ENCODE measurements at regions of chr14 and their contacts with region 1.

Region 1: GRCh38 chr14:56491299-56492285 is 88.0 kb upstream of the TMEM260 start:
- DNase-seq: no peak
- ATAC-seq: peak; percentile 61
- H3K4me3 Mint-ChIP-seq: no peak overlapping the region
- H3K27ac Mint-ChIP-seq: no peak overlapping the region
- H3K4me1 Mint-ChIP-seq: peaks cover 4% of the 10 kb centered on the region
- H3K27me3 Mint-ChIP-seq: no peaks in the 10 kb centered on the region
- CTCF ChIP-seq: no peak

Region 2: DNA sequence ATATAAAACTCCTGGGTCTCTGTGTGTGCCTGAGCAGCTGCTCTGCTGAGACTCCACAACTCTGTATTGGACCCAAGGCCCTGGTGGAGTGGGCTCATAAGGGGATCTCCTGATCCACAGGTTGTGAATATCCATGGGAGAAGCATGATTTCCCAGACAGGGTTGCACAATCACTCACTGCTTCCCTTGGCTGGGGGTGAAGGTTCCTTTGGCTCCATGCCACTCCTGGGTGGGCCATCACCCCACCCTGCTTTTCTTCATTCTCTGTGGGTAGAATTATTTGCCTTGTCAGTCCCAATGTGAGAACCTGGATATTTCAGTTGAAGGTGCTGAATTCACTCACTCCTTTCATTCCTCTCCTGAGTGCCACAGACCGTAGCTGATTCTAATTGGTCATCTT is 117.2 kb before region 1 on chr14:
- CTCF ChIA-PET with region 1: no interaction called
- POLR2A ChIA-PET with region 1: no interaction called
- intact Hi-C with region 1: no loop called
- DNase-seq: no peak
- ATAC-seq: no peak
- H3K4me3 Mint-ChIP-seq: no peak overlapping the region
- H3K27ac Mint-ChIP-seq: no peak overlapping the region
- H3K4me1 Mint-ChIP-seq: no peaks in the 10 kb centered on the region
- H3K27me3 Mint-ChIP-seq: no peaks in the 10 kb centered on the region
- CTCF ChIP-seq: no peak

Region 3: GRCh38 chr14:56422703-56423213 is 68.8 kb before region 1 on chr14:
- CTCF ChIA-PET with region 1: no interaction called
- POLR2A ChIA-PET with region 1: no interaction called
- intact Hi-C with region 1: no loop called
- DNase-seq: no peak
- ATAC-seq: no peak
- H3K4me3 Mint-ChIP-seq: no peak overlapping the region
- H3K27ac Mint-ChIP-seq: no peak overlapping the region
- H3K4me1 Mint-ChIP-seq: no peaks in the 10 kb centered on the region
- H3K27me3 Mint-ChIP-seq: no peaks in the 10 kb centered on the region
- CTCF ChIP-seq: no peak

Region 4: GRCh38 chr14:56514663-56515371 is 23.2 kb after region 1 on chr14:
- CTCF ChIA-PET with region 1: interaction called, 11 read pairs
- POLR2A ChIA-PET with region 1: no interaction called
- intact Hi-C with region 1: no loop called
- DNase-seq: no peak
- ATAC-seq: no peak
- H3K4me3 Mint-ChIP-seq: no peak overlapping the region
- H3K27ac Mint-ChIP-seq: no peak overlapping the region
- H3K4me1 Mint-ChIP-seq: no peaks in the 10 kb centered on the region
- H3K27me3 Mint-ChIP-seq: peaks cover 8% of the 10 kb centered on the region
- CTCF ChIP-seq: no peak

Region 5: GRCh38 chr14:56579345-56580220 is 88.0 kb after region 1 on chr14 and contains the start of gene TMEM260:
- CTCF ChIA-PET with region 1: no interaction called
- POLR2A ChIA-PET with region 1: no interaction called
- intact Hi-C with region 1: loop called (anchors 5 kb)
- DNase-seq: peak; percentile 87
- ATAC-seq: peak; percentile 94
- H3K4me3 Mint-ChIP-seq: peak within 1 kb of the TSS; percentile 90
- H3K27ac Mint-ChIP-seq: peak within 1 kb of the TSS; percentile 96
- H3K4me1 Mint-ChIP-seq: peaks cover 35% of the 10 kb centered on the region
- H3K27me3 Mint-ChIP-seq: no peaks in the 10 kb centered on the region
- CTCF ChIP-seq: peak; percentile 78
- total RNA-seq, gene TMEM260: 22.0 and 24.7 TPM in 2 replicates

Region 6: DNA sequence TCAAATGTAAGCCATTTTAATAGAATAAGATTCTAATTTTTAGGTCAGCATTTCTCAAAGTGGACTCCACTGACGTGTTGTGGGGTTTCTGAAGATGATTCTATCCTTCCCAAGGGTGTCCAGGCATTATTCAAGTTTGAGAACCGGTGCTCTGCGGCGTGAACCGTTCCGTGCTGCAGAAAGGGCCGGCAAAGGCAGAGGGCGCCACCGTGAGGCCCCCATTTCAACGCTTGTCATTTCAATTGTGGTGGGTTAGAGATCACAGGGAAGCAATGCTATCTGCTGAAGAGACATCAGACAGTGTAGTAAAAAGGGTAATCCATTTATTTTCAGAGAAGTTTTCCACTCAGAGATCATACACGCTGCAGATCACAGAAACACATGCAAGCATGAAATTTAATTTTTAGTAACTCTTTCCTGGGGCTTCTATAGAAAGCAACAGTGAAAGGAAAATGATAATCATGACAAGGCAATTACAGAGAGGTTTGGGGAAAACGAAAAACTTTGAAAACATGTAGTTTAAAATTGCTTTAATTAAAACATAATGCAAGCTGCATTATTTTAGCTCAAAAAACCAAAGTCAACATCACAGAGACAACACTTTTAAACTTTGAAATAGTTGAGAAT is 575.4 kb after region 1 on chr14:
- CTCF ChIA-PET with region 1: no interaction called
- POLR2A ChIA-PET with region 1: no interaction called
- intact Hi-C with region 1: loop called (anchors 1 kb)
- DNase-seq: no peak
- ATAC-seq: no peak
- H3K4me3 Mint-ChIP-seq: no peak overlapping the region
- H3K27ac Mint-ChIP-seq: no peak overlapping the region
- H3K4me1 Mint-ChIP-seq: no peaks in the 10 kb centered on the region
- H3K27me3 Mint-ChIP-seq: peaks cover 24% of the 10 kb centered on the region
- CTCF ChIP-seq: no peak

Region 7: DNA sequence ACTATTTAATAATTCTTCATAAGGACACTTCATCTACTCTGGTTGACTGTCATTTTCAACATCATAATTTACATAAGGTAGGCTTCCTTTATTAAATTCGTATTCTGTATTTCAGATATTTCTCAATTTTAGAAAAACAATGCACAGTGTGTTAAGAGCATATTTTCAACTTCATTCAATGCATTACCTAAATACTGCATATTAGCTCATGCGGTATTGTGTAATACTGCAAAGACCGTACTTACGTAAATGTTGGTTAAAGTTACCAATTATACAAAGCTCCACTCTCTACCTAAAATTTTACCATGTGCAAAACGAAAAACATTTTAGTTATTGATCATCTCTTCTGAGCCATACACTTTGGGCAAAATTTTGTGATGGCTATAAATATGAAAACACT is 714.3 kb after region 1 on chr14:
- CTCF ChIA-PET with region 1: no interaction called
- POLR2A ChIA-PET with region 1: no interaction called
- intact Hi-C with region 1: loop called (anchors 2 kb)
- DNase-seq: no peak
- ATAC-seq: no peak
- H3K4me3 Mint-ChIP-seq: no peak overlapping the region
- H3K27ac Mint-ChIP-seq: no peak overlapping the region
- H3K4me1 Mint-ChIP-seq: no peaks in the 10 kb centered on the region
- H3K27me3 Mint-ChIP-seq: no peaks in the 10 kb centered on the region
- CTCF ChIP-seq: no peak

Region 8: GRCh38 chr14:57293866-57294837 is 802.6 kb after region 1 on chr14:
- CTCF ChIA-PET with region 1: interaction called, 11 read pairs
- POLR2A ChIA-PET with region 1: no interaction called
- intact Hi-C with region 1: loop called (anchors 1 kb)
- DNase-seq: no peak
- ATAC-seq: no peak
- H3K4me3 Mint-ChIP-seq: no peak overlapping the region
- H3K27ac Mint-ChIP-seq: no peak overlapping the region
- H3K4me1 Mint-ChIP-seq: no peaks in the 10 kb centered on the region
- H3K27me3 Mint-ChIP-seq: no peaks in the 10 kb centered on the region
- CTCF ChIP-seq: no peak

Region 9: DNA sequence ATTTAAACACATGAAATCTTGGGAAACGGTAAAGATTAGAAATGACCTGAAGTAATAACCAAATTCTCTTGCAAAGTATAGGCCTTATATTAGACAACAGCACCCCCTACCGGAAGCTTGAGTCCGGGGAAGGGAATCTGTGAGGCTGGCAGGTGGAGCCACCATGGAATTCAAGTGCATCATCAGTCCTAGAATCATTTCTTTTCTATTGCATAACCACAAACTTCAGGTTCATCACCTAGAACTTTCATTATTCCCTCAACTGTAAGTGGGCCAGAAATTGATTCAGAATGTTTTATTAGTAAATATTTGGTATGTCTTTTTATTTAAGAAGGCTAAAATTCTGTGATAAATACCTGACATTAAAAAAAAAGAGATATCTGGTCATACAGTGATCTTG is 825.7 kb after region 1 on chr14:
- CTCF ChIA-PET with region 1: interaction called, 57 read pairs
- POLR2A ChIA-PET with region 1: no interaction called
- intact Hi-C with region 1: loop called (anchors 1 kb)
- DNase-seq: no peak
- ATAC-seq: peak; percentile 68
- H3K4me3 Mint-ChIP-seq: no peak overlapping the region
- H3K27ac Mint-ChIP-seq: no peak overlapping the region
- H3K4me1 Mint-ChIP-seq: peaks cover 3% of the 10 kb centered on the region
- H3K27me3 Mint-ChIP-seq: no peaks in the 10 kb centered on the region
- CTCF ChIP-seq: peak; percentile 74

Region 10: DNA sequence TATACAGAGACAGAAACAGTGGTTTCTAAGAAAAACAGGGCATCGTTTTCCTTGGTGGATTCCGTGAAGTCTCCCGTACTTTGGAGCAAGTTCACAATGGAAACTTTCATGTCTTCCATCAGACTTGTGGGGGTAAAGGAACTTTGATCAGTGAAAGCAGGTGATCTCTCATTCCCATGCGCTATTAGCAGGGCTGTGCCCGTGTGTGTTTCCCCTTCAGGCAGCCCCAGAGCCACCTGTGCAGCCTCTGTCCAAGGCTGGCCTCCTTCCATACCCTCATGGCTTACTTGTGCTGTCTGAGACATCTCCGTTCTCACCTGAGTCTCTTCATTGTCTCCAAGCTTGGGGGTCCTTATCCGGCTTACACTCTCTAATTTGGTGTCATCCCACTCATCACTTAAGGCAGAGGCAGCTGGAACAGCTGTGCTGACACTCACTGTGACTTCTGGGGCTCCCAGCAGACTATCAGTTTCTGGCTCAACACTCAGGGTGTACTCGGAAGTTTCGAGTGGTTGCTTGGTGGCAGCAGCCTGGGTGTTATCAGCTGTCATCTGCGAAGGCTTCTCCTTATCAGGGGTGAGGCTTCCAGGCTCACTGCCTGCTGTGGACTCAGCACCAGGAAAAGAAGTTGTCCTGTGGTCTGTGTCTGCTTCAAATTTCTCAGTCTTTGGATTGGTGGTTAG is 1646.6 kb after region 1 on chr14:
- CTCF ChIA-PET with region 1: no interaction called
- POLR2A ChIA-PET with region 1: no interaction called
- intact Hi-C with region 1: no loop called
- DNase-seq: no peak
- ATAC-seq: no peak
- H3K4me3 Mint-ChIP-seq: no peak overlapping the region
- H3K27ac Mint-ChIP-seq: no peak overlapping the region
- H3K4me1 Mint-ChIP-seq: no peaks in the 10 kb centered on the region
- H3K27me3 Mint-ChIP-seq: no peaks in the 10 kb centered on the region
- CTCF ChIP-seq: no peak